ENCODE measurements at regions of chr10 and their contacts with region 1.

Region 1: DNA sequence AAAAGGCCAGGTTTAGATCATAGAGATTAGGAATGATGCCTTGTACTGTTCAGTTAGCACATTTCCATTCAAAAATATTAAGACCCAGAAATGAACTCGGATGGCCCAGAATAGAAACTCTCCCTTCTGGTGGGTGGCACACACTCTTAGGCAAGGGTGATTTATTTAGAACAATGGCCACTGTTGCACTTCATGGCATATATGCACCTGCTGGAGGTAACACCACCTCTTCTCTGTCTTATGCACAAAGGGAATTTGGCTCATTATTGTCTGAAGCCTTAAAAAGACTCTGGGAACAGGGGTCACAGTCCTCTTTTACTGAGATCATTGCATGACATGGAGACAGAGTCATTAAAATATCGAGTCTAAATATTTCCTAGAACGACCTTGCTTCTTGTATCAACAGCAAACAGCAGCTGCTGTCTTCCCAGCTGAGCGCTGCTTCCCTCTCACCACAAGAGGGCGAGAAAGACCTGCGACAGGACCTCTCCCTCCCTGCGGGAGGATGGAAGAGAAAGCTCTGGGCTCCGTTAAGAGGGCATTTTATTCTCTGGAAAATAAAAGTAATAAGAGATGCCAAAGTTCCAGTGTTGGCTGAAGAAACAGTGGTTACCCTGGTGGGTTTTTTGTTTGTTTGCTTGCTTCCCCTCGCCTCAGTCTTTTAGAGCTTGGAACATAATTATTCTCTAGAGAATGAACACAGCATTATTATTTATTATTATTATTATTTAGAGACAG is 13.6 kb upstream of the BAMBI start:
- DNase-seq: no peak
- H3K4me3 ChIP-seq: no peak overlapping the region
- H3K27me3 ChIP-seq: peaks cover 10% of the 10 kb centered on the region
- CTCF ChIP-seq: peak; percentile 99

Region 2: DNA sequence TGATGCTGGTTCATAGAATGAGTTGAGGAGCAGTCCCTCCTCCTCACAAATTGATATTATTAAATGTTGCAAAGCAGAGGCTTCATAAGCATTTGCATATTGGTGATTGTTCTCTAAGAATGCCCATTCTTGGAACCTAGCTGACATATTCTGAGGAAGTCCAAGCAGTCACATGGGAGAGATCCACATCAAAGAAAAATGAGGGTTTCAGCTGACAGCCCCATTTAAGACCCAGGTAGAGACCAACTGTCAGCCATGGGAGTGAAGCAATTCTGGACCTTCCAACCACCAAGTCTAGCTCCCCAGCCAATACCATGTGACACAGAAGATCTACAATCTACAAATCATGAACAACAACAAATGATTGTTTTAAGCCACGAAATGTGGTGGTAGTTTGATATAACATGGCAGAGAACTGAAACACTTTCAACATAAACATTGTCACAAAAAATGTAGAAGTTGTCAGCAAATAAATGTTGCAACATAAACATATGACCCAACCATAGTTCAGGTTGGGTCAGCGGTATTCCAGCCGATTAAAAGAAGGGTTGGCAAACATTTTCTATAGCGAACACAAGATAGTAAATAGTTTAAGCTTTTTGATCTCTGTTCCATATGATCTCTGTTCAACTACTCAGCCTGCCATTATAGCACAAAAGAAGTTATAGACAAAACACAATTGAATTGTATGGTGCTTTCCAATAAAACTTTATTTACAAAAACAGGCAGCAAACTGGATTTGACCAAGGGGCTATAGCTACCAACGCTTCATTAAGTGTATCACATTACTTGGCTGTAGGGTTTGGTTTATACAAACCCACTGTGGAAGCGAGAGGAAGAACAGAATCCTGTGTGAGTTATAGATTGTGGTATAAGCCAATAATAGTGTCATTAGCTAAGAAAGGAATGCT is 319.5 kb before region 1 on chr10:
- CTCF ChIA-PET with region 1: no interaction called
- POLR2A ChIA-PET with region 1: no interaction called
- DNase-seq: no peak
- H3K4me3 ChIP-seq: no peak overlapping the region
- H3K27me3 ChIP-seq: peaks cover 3% of the 10 kb centered on the region; the same call in 1 of the 2 replicates
- CTCF ChIP-seq: no peak

Region 3: DNA sequence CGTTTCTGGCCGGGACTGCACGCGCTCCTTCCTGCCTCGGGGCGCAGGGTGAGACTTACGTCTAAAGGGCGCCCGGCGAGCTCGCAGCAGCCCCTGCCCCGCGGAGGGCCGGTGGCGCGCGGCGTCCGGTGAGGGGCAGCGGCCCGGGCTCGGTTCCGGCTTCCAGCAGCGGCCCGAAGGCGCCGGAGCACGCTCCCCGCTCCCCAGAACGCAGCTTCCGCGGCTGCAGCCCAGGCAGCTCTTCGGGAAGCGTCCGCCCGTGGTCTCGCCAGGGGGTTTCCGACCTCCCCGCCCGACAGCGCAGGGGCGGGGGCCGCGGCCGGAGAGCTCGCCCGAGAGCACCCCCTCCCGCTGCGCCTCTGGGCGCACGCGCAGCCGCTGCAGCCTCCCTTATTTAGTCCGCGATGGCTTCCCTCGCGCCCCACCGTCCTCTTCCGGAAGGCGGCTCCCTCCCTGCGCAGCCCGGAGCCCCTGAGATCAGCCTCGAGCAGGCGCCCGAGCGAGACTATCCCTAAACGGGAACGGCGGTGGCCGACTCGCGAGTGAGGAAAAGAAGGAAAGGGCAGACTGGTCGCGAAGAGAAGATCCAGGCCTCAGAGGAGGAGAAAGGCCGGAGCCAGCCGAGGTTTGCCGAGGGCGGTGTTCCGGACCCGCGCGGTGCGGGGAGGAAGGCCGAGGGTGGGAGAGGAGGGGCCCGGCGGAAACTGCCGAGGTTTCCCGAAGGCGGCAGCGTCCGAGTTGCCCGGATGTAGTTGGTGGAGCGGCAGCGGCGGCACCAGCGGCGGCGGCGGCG is 131.2 kb before region 1 on chr10 and contains the start of gene WAC:
- CTCF ChIA-PET with region 1: no interaction called
- POLR2A ChIA-PET with region 1: no interaction called
- DNase-seq: peak; percentile 51
- H3K4me3 ChIP-seq: peak within 1 kb of the TSS; percentile 97
- H3K27me3 ChIP-seq: no peaks in the 10 kb centered on the region
- CTCF ChIP-seq: peak; percentile 27
- polyA plus RNA-seq, gene WAC: 47.7 and 78.7 TPM in 2 replicates

Region 4: DNA sequence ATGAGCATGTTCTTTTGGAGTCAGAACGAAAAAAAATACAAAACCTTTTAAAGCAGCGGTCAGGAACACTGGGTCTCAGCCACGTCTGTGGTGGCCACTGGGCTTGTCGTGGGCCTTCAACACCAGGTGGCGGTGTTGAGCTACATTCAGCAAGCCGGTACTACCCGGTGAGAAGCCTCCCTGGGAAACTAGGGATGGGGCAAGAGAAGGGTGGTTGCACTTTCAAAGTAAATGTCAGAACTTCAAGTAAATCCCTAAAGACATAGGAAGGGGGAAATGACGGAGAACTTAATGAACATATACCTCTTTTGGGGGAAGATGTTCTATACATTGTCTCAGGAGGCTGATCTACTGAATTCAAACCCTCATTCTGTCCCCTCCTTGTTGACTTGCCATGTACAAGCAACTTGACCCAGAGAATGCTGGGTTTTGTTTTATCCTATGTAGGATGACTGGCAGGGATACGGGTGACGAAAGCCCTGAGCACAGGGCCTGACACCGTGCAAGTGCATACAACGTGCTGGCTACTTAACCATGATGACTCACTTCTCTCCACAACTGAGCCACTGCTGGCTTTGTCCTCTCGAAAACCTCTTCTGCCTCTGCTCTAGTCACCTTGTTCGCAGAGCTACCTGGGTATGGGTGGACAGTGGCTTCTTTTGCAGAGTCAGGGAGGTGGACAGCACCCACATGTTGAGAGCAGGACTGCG is 35.4 kb before region 1 on chr10:
- CTCF ChIA-PET with region 1: interaction called, 26 read pairs
- POLR2A ChIA-PET with region 1: interaction called, 3 read pairs
- DNase-seq: no peak
- H3K4me3 ChIP-seq: no peak overlapping the region
- H3K27me3 ChIP-seq: peaks cover 6% of the 10 kb centered on the region
- CTCF ChIP-seq: peak; percentile 94

Region 5: GRCh38 chr10:28652696-28653095 is 11.0 kb before region 1 on chr10:
- CTCF ChIA-PET with region 1: no interaction called
- POLR2A ChIA-PET with region 1: no interaction called
- DNase-seq: no peak
- H3K4me3 ChIP-seq: no peak overlapping the region
- H3K27me3 ChIP-seq: peaks cover 2% of the 10 kb centered on the region; the same call in 1 of the 2 replicates
- CTCF ChIP-seq: no peak

Region 6: GRCh38 chr10:28676968-28677887 is 13.5 kb after region 1 on chr10 and contains the start of gene BAMBI:
- CTCF ChIA-PET with region 1: interaction called, 13 read pairs
- POLR2A ChIA-PET with region 1: no interaction called
- DNase-seq: no peak
- H3K4me3 ChIP-seq: peak within 1 kb of the TSS; percentile 86
- H3K27me3 ChIP-seq: peaks cover 20% of the 10 kb centered on the region
- CTCF ChIP-seq: peak; percentile 47
- polyA plus RNA-seq, gene BAMBI: 5.1 and 6.0 TPM in 2 replicates

Region 7: GRCh38 chr10:28698075-28698474 is 34.3 kb after region 1 on chr10:
- CTCF ChIA-PET with region 1: no interaction called
- POLR2A ChIA-PET with region 1: no interaction called
- DNase-seq: no peak
- H3K4me3 ChIP-seq: no peak overlapping the region
- H3K27me3 ChIP-seq: peaks cover 2% of the 10 kb centered on the region; the same call in 1 of the 2 replicates
- CTCF ChIP-seq: no peak

Region 8: GRCh38 chr10:29127037-29127700 is 463.4 kb after region 1 on chr10:
- CTCF ChIA-PET with region 1: interaction called, 27 read pairs
- POLR2A ChIA-PET with region 1: no interaction called
- DNase-seq: no peak
- H3K4me3 ChIP-seq: no peak overlapping the region
- H3K27me3 ChIP-seq: no peaks in the 10 kb centered on the region
- CTCF ChIP-seq: no peak

Region 9: GRCh38 chr10:29304264-29305030 is 640.7 kb after region 1 on chr10:
- CTCF ChIA-PET with region 1: interaction called, 52 read pairs
- POLR2A ChIA-PET with region 1: no interaction called
- DNase-seq: peak; percentile 14
- H3K4me3 ChIP-seq: no peak overlapping the region
- H3K27me3 ChIP-seq: no peaks in the 10 kb centered on the region; the same call in 1 of the 2 replicates
- CTCF ChIP-seq: peak; percentile 76